Endothelial cell of umbilical vein (primary cell): ENCODE measurements at regions of chr3 and their contacts with region 1.

Region 1: DNA sequence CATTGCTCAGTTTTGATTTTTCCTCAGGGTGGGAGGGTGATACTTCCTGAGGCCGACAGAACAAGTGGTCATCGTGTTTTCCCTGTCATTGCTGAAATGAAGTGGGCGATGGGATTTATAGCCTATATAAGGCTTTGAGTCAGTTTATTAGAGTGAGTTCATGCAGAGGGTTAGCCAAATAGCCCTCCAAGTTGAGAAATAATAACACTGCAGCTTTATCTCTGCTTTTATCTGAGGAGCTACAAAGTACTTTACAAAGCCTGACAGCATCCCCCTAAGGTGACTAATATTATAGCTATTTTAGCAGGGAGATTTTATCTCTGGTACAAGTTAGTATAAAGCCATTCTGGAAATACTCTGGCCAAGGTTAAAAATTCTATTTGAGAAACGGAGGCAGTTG is 389.6 kb downstream of the MFSD1 start:
- DNase-seq: peak; percentile 89
- H3K4me3 ChIP-seq: no peak overlapping the region
- H3K27ac ChIP-seq: peak overlapping the region; percentile 52
- H3K4me1 ChIP-seq: peaks cover 28% of the 10 kb centered on the region
- H3K27me3 ChIP-seq: no peaks in the 10 kb centered on the region
- CTCF ChIP-seq: no peak
- POLR2A ChIP-seq: no peak

Region 2: GRCh38 chr3:158845765-158846350 is 345.6 kb before region 1 on chr3:
- CTCF ChIA-PET with region 1: interaction called, 3 read pairs
- POLR2A ChIA-PET with region 1: no interaction called
- dilution Hi-C with region 1: no loop called
- intact Hi-C with region 1: loop called (anchors 5 kb)
- DNase-seq: peak; percentile 30
- H3K4me3 ChIP-seq: no peak overlapping the region
- H3K27ac ChIP-seq: no peak overlapping the region
- H3K4me1 ChIP-seq: no peaks in the 10 kb centered on the region
- H3K27me3 ChIP-seq: no peaks in the 10 kb centered on the region
- CTCF ChIP-seq: peak; percentile 49 to 60
- POLR2A ChIP-seq: no peak

Region 3: DNA sequence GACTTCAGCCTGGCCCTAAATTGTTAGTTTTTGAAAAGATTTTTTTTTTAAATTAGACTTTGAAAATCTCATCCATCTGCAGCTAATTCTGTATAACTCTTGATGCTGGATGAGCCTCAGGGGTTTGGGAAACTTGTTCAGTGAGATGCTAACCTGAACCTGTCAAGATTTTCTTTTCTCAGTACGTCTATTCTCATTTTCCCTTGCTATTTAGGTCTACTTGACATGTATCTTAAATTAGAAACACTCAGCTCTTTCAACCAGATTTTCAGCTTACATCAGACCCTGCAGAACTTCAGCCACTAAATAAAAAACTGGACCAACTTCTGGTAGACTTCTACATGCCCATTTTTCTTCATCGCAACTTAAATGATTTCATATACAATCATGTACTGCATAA is 328.2 kb before region 1 on chr3:
- CTCF ChIA-PET with region 1: no interaction called
- POLR2A ChIA-PET with region 1: no interaction called
- dilution Hi-C with region 1: no loop called
- intact Hi-C with region 1: no loop called
- DNase-seq: no peak
- H3K4me3 ChIP-seq: no peak overlapping the region
- H3K27ac ChIP-seq: no peak overlapping the region
- H3K4me1 ChIP-seq: no peaks in the 10 kb centered on the region
- H3K27me3 ChIP-seq: no peaks in the 10 kb centered on the region
- CTCF ChIP-seq: no peak
- POLR2A ChIP-seq: no peak

Region 4: GRCh38 chr3:159082519-159082918 is 108.9 kb before region 1 on chr3:
- CTCF ChIA-PET with region 1: no interaction called
- POLR2A ChIA-PET with region 1: no interaction called
- dilution Hi-C with region 1: no loop called
- intact Hi-C with region 1: loop called (anchors 1 kb)
- DNase-seq: peak; percentile 61
- H3K4me3 ChIP-seq: no peak overlapping the region
- H3K27ac ChIP-seq: peak overlapping the region; percentile 52
- H3K4me1 ChIP-seq: peaks cover 10% of the 10 kb centered on the region
- H3K27me3 ChIP-seq: no peaks in the 10 kb centered on the region
- CTCF ChIP-seq: no peak
- POLR2A ChIP-seq: no peak

Region 5: GRCh38 chr3:159169828-159170227 is 21.6 kb before region 1 on chr3:
- CTCF ChIA-PET with region 1: interaction called, 7 read pairs
- POLR2A ChIA-PET with region 1: interaction called, 3 read pairs
- dilution Hi-C with region 1: no loop called
- intact Hi-C with region 1: loop called (anchors 1 kb)
- DNase-seq: peak; percentile 82
- H3K4me3 ChIP-seq: no peak overlapping the region
- H3K27ac ChIP-seq: peak overlapping the region; percentile 87
- H3K4me1 ChIP-seq: peaks cover 32% of the 10 kb centered on the region
- H3K27me3 ChIP-seq: no peaks in the 10 kb centered on the region
- CTCF ChIP-seq: no peak
- POLR2A ChIP-seq: peak; percentile 71

Region 6: GRCh38 chr3:159293493-159293892 is 102.0 kb after region 1 on chr3:
- CTCF ChIA-PET with region 1: no interaction called
- POLR2A ChIA-PET with region 1: no interaction called
- dilution Hi-C with region 1: no loop called
- intact Hi-C with region 1: no loop called
- DNase-seq: no peak
- H3K4me3 ChIP-seq: no peak overlapping the region
- H3K27ac ChIP-seq: no peak overlapping the region
- H3K4me1 ChIP-seq: no peaks in the 10 kb centered on the region
- H3K27me3 ChIP-seq: no peaks in the 10 kb centered on the region
- CTCF ChIP-seq: no peak
- POLR2A ChIP-seq: no peak